ENCODE measurements at regions of chr10 and their contacts with region 1.

Region 1: GRCh38 chr10:75235375-75236177 is at the start of gene COMTD1:
- DNase-seq: peak; percentile 92
- H3K4me3 Mint-ChIP-seq: peak within 1 kb of the TSS; percentile 76
- H3K27ac Mint-ChIP-seq: no peak within 1 kb of the TSS
- H3K4me1 Mint-ChIP-seq: peaks cover 24% of the 10 kb centered on the region
- H3K27me3 Mint-ChIP-seq: no peaks in the 10 kb centered on the region
- CTCF ChIP-seq: peak; percentile 100
- total RNA-seq, gene COMTD1: 18.3 and 34.3 TPM in 2 replicates

Region 2: GRCh38 chr10:75019370-75019769 is 216.2 kb before region 1 on chr10:
- CTCF ChIA-PET with region 1: interaction called, 4 read pairs
- POLR2A ChIA-PET with region 1: no interaction called
- intact Hi-C with region 1: loop called (anchors 5 kb)
- DNase-seq: peak; percentile 38
- H3K4me3 Mint-ChIP-seq: no peak overlapping the region
- H3K27ac Mint-ChIP-seq: no peak overlapping the region
- H3K4me1 Mint-ChIP-seq: no peaks in the 10 kb centered on the region
- H3K27me3 Mint-ChIP-seq: no peaks in the 10 kb centered on the region
- CTCF ChIP-seq: peak; percentile 47

Region 3: GRCh38 chr10:75117995-75118394 is 117.6 kb before region 1 on chr10:
- CTCF ChIA-PET with region 1: interaction called, 28 read pairs
- POLR2A ChIA-PET with region 1: interaction called, 27 read pairs
- intact Hi-C with region 1: loop called (anchors 2 kb)
- DNase-seq: no peak
- H3K4me3 Mint-ChIP-seq: no peak overlapping the region
- H3K27ac Mint-ChIP-seq: no peak overlapping the region
- H3K4me1 Mint-ChIP-seq: peaks cover 9% of the 10 kb centered on the region
- H3K27me3 Mint-ChIP-seq: no peaks in the 10 kb centered on the region
- CTCF ChIP-seq: no peak

Region 4: DNA sequence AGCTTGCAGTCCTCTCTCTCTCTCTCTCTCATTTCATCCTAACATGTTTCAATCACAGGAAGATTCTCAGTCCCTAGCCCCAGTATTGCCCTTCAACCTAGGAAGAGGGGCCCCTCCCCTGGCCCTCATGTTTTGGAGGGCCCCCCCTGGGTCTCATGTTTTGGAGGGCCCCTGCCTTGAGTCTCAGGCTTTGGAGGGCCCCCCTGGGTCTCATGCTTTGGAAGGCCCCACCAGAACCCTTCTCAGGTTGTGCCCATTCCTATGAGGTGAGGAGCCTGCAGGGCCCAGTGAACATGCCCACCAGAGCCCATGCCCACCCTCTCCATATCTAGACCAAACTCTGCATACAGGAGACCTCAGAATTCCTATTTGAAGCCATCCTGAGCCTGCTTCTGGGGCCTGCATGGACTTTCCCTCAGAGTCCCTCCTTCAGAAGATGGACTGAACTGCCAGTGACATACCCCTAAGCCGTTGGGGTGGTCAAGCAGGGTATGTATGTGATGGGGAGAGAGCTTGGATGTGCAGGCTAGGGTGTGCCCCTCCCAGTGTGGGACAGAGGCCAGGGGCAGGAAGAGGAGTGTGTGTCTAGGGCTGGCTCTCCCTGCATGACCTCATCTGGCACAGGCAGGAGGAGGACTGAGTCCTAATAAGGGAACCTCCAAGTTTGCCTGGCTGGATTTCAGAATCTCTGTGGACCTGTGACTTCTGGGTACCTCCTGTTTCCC is 33.1 kb before region 1 on chr10:
- CTCF ChIA-PET with region 1: interaction called, 7 read pairs
- POLR2A ChIA-PET with region 1: interaction called, 615 read pairs
- intact Hi-C with region 1: loop called (anchors 1 kb)
- DNase-seq: peak; percentile 67
- H3K4me3 Mint-ChIP-seq: no peak overlapping the region
- H3K27ac Mint-ChIP-seq: peak overlapping the region; percentile 88
- H3K4me1 Mint-ChIP-seq: peaks cover 51% of the 10 kb centered on the region
- H3K27me3 Mint-ChIP-seq: no peaks in the 10 kb centered on the region
- CTCF ChIP-seq: no peak

Region 5: GRCh38 chr10:75283671-75284470 is 48.3 kb after region 1 on chr10:
- CTCF ChIA-PET with region 1: no interaction called
- POLR2A ChIA-PET with region 1: no interaction called
- intact Hi-C with region 1: no loop called
- DNase-seq: no peak
- H3K4me3 Mint-ChIP-seq: no peak overlapping the region
- H3K27ac Mint-ChIP-seq: no peak overlapping the region
- H3K4me1 Mint-ChIP-seq: no peaks in the 10 kb centered on the region
- H3K27me3 Mint-ChIP-seq: no peaks in the 10 kb centered on the region
- CTCF ChIP-seq: no peak

Region 6: GRCh38 chr10:75347186-75347585 is 111.6 kb after region 1 on chr10:
- CTCF ChIA-PET with region 1: no interaction called
- POLR2A ChIA-PET with region 1: no interaction called
- intact Hi-C with region 1: no loop called
- DNase-seq: no peak
- H3K4me3 Mint-ChIP-seq: no peak overlapping the region
- H3K27ac Mint-ChIP-seq: no peak overlapping the region
- H3K4me1 Mint-ChIP-seq: peaks cover 6% of the 10 kb centered on the region
- H3K27me3 Mint-ChIP-seq: no peaks in the 10 kb centered on the region
- CTCF ChIP-seq: no peak

Measured in MCF 10A (cell line).